AG04450 (cell line): ENCODE measurements at regions of chr9 and their contacts with region 1.

Region 1: DNA sequence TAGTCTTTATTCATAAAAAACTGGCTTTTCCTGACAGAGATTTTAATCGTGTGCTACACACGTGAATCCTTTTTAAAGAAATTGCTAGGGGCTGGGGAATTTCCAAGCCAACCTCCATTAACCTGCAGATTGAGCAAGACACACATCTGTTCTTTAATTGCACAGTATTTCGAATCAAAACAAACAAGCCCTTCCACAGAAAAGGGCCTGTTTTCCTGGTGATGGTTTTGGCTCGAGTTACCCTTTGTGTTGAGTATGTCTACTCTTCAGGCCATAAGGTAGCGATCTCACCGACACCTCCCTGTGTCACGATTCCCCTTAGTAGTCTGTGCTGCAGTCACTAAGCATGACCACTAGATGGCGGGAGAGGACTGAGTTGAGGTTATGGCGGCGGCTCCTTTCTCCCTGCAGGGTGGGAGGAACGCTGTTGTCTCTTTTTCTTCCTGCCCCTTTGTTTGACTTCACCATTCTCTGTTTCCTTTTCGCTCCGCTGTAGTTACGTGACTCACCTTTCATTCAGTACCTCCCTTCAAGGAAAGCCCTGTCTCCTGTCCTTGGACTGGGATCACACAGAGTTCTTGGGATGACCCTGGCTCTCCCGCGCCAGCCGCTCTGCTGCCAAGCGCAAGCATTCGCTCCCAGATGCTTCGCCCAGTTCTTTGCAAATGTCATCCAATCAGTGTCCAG is 137.1 kb upstream of the SLC24A2 start:
- DNase-seq: peak; percentile 55
- H3K4me3 ChIP-seq: peak overlapping the region; percentile 65
- H3K27ac ChIP-seq: no peak overlapping the region
- H3K27me3 ChIP-seq: no peaks in the 10 kb centered on the region
- CTCF ChIP-seq: peak; percentile 98

Region 2: GRCh38 chr9:19471737-19472648 is 454.0 kb before region 1 on chr9:
- CTCF ChIA-PET with region 1: interaction called, 15 read pairs
- POLR2A ChIA-PET with region 1: no interaction called
- DNase-seq: no peak
- H3K4me3 ChIP-seq: no peak overlapping the region
- H3K27ac ChIP-seq: no peak overlapping the region
- H3K27me3 ChIP-seq: peaks cover 14% of the 10 kb centered on the region
- CTCF ChIP-seq: peak; percentile 67

Region 3: GRCh38 chr9:19941874-19942273 is 15.9 kb after region 1 on chr9:
- CTCF ChIA-PET with region 1: no interaction called
- POLR2A ChIA-PET with region 1: no interaction called
- DNase-seq: no peak
- H3K4me3 ChIP-seq: no peak overlapping the region
- H3K27ac ChIP-seq: no peak overlapping the region
- H3K27me3 ChIP-seq: no peaks in the 10 kb centered on the region
- CTCF ChIP-seq: no peak